ENCODE measurements at regions of chr14 and their contacts with region 1.

Region 1: GRCh38 chr14:95993768-95994592 is 45.2 kb upstream of the C14orf132 start:
- DNase-seq: no peak
- H3K4me3 ChIP-seq: no peak overlapping the region
- CTCF ChIP-seq: peak; percentile 56

Region 2: GRCh38 chr14:94689218-94689984 is 1304.6 kb before region 1 on chr14:
- CTCF ChIA-PET with region 1: interaction called, 18 read pairs
- POLR2A ChIA-PET with region 1: no interaction called
- DNase-seq: no peak
- H3K4me3 ChIP-seq: peak overlapping the region; percentile 33
- CTCF ChIP-seq: peak; percentile 97

Region 3: DNA sequence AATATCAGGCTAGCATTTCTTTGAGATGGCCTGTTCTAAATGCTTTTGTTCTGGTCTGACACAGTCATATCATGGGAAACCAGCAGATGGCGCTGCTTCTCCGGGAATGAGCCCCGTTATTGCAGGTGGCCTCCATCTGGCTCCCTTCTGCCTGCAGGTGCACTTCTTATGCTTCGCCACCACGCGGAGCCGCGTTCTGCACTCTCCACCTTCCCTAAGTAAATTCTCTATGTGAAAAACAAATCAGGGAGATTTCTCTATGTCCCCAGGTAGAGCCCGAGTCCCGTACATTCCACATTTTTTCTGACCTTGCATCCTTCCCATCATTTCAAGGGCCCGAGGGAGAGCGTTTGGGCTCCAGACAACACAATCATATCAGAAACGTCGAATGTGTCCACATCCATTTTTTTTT is 433.0 kb before region 1 on chr14:
- CTCF ChIA-PET with region 1: interaction called, 192 read pairs
- POLR2A ChIA-PET with region 1: no interaction called
- DNase-seq: peak; percentile 21
- H3K4me3 ChIP-seq: no peak overlapping the region
- CTCF ChIP-seq: peak; percentile 85

Region 4: GRCh38 chr14:95981965-95982719 is 11.8 kb before region 1 on chr14:
- CTCF ChIA-PET with region 1: interaction called, 12 read pairs
- POLR2A ChIA-PET with region 1: no interaction called
- DNase-seq: no peak
- H3K4me3 ChIP-seq: no peak overlapping the region
- CTCF ChIP-seq: no peak

Region 5: GRCh38 chr14:96082420-96083300 is 88.7 kb after region 1 on chr14:
- CTCF ChIA-PET with region 1: interaction called, 708 read pairs
- POLR2A ChIA-PET with region 1: no interaction called
- DNase-seq: no peak
- H3K4me3 ChIP-seq: no peak overlapping the region
- CTCF ChIP-seq: no peak

Region 6: DNA sequence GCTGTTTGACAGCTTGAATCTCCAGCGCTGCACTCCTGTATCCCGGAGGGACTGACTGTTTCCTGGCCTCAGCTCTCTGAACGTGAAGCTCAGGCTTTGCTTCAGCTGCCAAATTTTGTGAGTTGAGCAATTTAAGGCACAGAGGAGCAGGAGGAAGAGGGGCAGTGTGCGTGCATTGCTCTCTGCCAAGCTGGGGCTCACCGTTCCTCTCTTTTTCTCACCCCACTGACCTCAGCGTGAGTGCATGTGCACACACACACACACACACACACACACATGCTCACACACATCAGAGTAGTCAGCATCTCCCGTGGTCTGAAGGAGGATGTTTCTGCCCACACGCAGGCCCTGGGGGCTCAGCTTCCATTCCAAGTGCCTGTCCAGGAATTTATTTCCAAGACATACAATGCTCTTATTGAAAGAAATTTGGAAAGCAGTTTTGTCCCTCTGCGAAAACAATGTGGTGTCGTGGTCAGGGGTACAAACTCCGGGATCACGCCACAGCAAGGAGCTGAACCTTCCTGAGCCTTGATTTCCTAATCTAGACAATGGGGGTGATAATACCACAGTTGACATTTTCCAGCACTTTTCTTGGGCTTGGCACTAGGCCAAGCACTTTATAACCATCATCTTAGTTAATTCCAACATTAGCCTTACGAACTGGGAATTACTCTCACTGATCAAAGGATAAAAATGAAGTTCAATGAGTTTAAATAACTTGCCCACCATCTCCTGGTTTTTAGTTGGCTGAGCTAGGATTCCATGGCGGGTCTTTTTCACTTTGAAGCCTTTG is 183.0 kb after region 1 on chr14:
- CTCF ChIA-PET with region 1: no interaction called
- POLR2A ChIA-PET with region 1: no interaction called
- DNase-seq: peak; percentile 71
- H3K4me3 ChIP-seq: no peak overlapping the region
- CTCF ChIP-seq: no peak

Region 7: DNA sequence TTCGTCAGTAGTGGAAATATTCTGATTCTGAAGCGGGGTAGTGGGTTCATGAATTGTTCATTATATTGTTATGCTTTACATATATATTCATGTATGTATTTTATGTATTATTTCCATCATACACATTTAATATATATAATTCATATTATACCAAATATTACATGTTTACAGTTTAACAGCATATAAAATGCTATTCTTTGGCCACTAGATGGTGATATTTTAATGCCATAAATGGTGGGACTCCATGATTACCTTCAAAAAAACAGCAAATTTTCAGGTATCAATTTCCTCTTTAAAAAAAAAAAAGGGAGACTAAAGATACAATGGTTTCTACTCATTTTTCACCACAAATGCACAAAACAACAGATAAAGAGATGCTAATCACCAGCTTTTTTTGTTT is 303.0 kb after region 1 on chr14:
- CTCF ChIA-PET with region 1: interaction called, 11 read pairs
- POLR2A ChIA-PET with region 1: no interaction called
- DNase-seq: no peak
- H3K4me3 ChIP-seq: no peak overlapping the region
- CTCF ChIP-seq: peak; percentile 20